ENCODE measurements at regions of chr17 and their contacts with region 1.

Region 1: DNA sequence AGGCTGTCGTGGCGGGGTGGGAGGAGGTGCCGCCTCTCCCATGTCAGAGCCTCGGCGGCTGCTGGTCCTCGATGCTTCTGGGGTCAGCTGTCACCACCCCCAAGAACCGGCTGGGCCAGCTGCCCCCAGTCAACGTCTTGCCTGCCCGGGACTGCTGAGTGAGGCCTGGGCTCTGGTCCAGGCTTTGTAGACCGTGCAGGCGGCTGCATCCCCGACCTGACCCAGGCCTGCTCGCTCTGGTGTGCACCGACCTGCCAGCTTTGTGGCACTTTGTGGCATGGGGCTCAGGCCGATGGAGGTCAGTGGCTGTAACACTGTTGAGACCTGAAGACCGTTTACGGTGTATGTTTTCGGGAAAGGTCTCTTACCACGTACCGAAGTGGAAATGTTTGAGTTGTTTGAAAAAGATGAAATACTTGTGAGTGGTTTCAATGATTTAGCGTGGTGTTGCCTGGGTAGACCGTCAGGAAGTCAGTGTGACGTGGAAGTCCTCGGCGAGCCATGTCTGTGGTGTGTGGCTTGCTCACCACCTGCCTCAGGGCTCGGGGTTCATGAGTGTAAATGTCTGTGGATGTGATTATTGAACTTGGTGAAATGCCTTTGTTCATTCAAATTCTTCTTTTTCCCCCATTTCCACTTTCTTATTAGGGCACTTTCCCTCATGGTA is 53.2 kb upstream of the ZNF750 start:
- DNase-seq: peak; percentile 62 to 91 (median 73)
- ATAC-seq: peak; percentile 97
- H3K4me3 ChIP-seq: peak overlapping the region; percentile 30
- H3K4me3 Mint-ChIP-seq: peak overlapping the region; percentile 80
- H3K27ac ChIP-seq: peak overlapping the region; percentile 13 to 49
- H3K27ac Mint-ChIP-seq: peak overlapping the region; percentile 95
- H3K4me1 ChIP-seq: peaks cover 39% of the 10 kb centered on the region
- H3K4me1 Mint-ChIP-seq: peaks cover 26% of the 10 kb centered on the region
- H3K27me3 ChIP-seq: no peaks in the 10 kb centered on the region
- H3K27me3 Mint-ChIP-seq: no peaks in the 10 kb centered on the region
- CTCF ChIP-seq: no peak

Region 2: DNA sequence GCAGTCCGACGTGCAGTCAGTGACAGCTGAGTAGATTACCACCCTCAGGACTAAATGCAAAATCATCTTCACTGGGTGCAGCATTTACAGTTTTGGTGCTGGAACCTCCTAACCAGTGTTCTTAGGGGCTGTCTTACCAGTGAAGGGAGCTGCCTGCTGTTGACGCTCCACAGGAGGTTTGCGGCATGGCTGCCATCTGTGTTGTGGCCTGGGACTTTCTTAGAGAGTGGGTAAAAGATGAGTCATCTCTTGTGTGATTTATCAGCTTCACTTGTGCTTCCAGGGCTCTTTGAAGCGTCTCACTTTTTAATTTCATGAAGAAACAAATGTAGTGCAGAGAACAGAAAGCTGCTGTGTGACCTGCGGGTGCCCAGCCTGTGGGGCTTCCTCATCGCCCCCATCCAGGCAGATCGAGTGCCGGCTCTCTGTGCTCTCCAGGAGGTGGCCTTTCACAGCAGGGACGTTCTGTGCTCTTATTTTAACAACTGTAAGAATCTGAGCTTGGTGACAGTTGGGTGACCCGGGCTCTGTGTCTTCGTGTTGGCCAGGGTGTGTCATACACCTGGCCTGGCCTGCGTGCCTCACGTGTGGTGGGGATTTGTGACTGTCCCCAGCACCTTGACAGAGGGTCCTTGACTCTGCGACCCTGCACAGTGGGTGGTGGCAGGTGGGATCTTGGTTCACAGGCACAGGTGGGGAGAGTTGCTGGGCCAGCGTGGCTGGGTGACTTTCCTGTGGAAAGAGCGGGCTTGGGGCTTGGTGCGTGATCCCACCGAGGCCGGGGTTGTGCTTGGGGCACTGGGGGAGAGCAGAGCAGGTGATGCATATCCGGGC is 28.9 kb before region 1 on chr17:
- CTCF ChIA-PET with region 1: interaction called, 15 read pairs
- POLR2A ChIA-PET with region 1: interaction called, 19 read pairs
- intact Hi-C with region 1: loop called (anchors 1 to 5 kb)
- DNase-seq: peak; percentile 71 to 96 (median 85)
- ATAC-seq: peak; percentile 90
- H3K4me3 ChIP-seq: peak overlapping the region; percentile 19
- H3K4me3 Mint-ChIP-seq: peak overlapping the region; percentile 32
- H3K27ac ChIP-seq: peak overlapping the region; percentile 75 to 85
- H3K27ac Mint-ChIP-seq: peak overlapping the region; percentile 97
- H3K4me1 ChIP-seq: peaks cover 87% of the 10 kb centered on the region
- H3K4me1 Mint-ChIP-seq: peaks cover 53% of the 10 kb centered on the region
- H3K27me3 ChIP-seq: no peaks in the 10 kb centered on the region
- H3K27me3 Mint-ChIP-seq: no peaks in the 10 kb centered on the region
- CTCF ChIP-seq: no peak

Region 3: DNA sequence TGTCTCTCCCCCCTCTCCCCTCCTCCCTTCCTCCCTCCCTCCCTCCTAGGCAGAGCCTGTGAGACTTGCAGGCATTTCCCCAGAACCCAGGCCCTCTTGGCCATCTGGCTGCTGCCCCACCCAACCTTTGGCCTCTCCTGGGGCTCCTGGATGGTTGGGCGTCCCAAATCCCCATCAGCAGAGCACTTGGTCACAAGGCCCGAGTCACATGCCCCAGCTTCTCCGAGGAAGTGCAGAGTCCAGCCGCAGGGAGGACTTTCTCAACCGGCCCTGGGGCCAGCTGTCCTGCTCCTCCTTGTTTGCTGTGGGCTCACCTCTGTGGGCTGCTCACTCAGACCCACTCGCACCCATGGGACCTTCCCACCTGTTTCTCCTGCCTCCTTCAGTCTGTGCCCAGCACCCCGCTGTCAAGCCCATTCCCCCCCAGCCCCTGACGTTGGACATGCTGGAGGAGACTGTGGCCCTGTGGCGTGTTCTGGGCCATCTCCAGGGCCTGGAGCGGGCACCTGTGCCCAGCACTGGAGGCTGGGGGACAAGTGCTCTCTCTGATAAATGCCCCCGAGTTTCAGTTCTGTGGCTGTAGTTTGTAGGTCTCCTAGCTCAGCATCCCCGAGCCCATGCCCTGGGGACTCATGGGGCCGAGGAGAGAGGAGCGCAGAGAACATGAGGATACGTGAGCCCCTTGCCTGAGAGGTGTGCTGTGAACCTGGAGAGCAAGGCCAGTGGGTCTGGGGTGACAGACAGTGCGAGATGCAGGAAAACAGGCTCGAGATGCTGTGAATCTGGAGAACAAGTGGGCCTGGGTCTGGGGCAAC is 10.9 kb before region 1 on chr17:
- CTCF ChIA-PET with region 1: interaction called, 6 read pairs
- POLR2A ChIA-PET with region 1: interaction called, 29 read pairs
- intact Hi-C with region 1: loop called in 1 of 2 experiments (anchors 1 kb)
- DNase-seq: no peak
- ATAC-seq: no peak
- H3K4me3 ChIP-seq: peak overlapping the region; percentile 35
- H3K4me3 Mint-ChIP-seq: peak overlapping the region; percentile 86
- H3K27ac ChIP-seq: peak overlapping the region; percentile 66 to 78
- H3K27ac Mint-ChIP-seq: peak overlapping the region; percentile 99
- H3K4me1 ChIP-seq: peaks cover 78% of the 10 kb centered on the region
- H3K4me1 Mint-ChIP-seq: peaks cover 77% of the 10 kb centered on the region
- H3K27me3 ChIP-seq: no peaks in the 10 kb centered on the region
- H3K27me3 Mint-ChIP-seq: no peaks in the 10 kb centered on the region
- CTCF ChIP-seq: no peak

Region 4: DNA sequence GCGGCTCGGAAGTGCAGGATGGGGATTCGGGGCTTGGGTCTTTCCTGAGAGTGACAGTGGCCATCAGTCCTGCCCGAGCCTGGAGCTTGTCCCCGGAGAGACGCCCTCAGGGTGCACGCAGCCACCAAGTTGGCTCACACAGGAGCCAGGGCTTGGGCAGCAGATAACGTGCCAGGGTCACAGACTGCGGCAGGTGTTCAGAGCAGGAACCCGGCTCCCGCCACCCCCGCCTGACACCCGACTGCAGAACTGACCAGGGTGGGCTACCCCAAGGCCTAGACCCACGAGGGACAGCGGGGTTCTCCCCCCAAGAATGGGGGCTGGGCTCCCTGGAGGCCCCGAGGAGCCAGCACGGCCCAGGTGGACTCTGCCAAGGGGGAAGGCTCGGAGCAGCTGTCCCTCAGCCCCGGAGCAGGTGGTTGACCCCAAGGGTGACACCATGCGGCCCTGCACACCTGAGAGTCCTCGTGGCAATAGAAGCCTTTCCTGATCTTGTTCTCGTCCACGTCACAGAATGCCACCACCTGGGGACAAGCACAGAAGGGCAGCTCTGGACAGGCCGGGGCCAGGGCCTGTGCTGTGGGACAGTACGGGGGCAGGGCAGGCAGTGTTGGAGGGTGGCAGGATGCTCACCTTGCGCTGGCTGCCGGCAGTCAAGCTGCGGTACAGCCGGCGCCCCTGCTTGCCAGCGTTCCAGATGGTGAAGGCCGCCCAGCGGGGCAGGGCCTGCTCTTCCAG is 63.9 kb after region 1 on chr17:
- CTCF ChIA-PET with region 1: no interaction called
- POLR2A ChIA-PET with region 1: no interaction called
- intact Hi-C with region 1: no loop called
- DNase-seq: peak in 2 of 14 experiments; percentile 17 to 30
- ATAC-seq: no peak
- H3K4me3 ChIP-seq: no peak overlapping the region
- H3K4me3 Mint-ChIP-seq: no peak overlapping the region
- H3K27ac ChIP-seq: no peak overlapping the region
- H3K27ac Mint-ChIP-seq: no peak overlapping the region
- H3K4me1 ChIP-seq: no peaks in the 10 kb centered on the region
- H3K4me1 Mint-ChIP-seq: no peaks in the 10 kb centered on the region
- H3K27me3 ChIP-seq: no peaks in the 10 kb centered on the region
- H3K27me3 Mint-ChIP-seq: no peaks in the 10 kb centered on the region
- CTCF ChIP-seq: no peak

Region 5: DNA sequence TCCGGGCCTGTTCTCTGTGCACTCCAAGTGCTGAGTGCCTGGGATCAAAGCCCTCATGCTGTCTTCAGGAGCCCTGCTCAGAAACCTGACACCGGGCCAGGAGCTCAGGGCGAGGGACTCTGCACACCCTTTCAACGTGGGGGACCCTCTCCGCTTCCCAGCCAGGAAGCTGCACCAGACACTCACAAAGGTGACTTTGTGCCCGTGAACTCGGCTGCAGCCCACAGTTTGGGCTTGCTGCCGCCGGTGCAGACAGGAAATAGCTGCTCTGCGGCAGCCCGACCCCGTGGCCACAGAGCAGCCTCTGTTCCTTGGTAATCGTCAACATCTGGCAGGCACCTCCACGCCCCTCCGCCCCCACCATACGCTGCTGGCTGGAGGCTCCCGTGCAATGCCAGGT is 92.9 kb after region 1 on chr17:
- CTCF ChIA-PET with region 1: no interaction called
- POLR2A ChIA-PET with region 1: no interaction called
- intact Hi-C with region 1: loop called in 1 of 2 experiments (anchors 5 kb)
- DNase-seq: peak; percentile 46 to 81 (median 69)
- ATAC-seq: peak; percentile 90
- H3K4me3 ChIP-seq: peak overlapping the region; percentile 21
- H3K4me3 Mint-ChIP-seq: peak overlapping the region; percentile 84
- H3K27ac ChIP-seq: peak overlapping the region in 1 of 2 donors; percentile 13
- H3K27ac Mint-ChIP-seq: peak overlapping the region; percentile 94
- H3K4me1 ChIP-seq: peaks cover 23% of the 10 kb centered on the region
- H3K4me1 Mint-ChIP-seq: peaks cover 68% of the 10 kb centered on the region
- H3K27me3 ChIP-seq: no peaks in the 10 kb centered on the region
- H3K27me3 Mint-ChIP-seq: no peaks in the 10 kb centered on the region
- CTCF ChIP-seq: no peak